Naive thymus-derived CD8-positive, alpha-beta T cell (primary cell): ENCODE measurements at regions of chr17 and their contacts with region 1.

Region 1: DNA sequence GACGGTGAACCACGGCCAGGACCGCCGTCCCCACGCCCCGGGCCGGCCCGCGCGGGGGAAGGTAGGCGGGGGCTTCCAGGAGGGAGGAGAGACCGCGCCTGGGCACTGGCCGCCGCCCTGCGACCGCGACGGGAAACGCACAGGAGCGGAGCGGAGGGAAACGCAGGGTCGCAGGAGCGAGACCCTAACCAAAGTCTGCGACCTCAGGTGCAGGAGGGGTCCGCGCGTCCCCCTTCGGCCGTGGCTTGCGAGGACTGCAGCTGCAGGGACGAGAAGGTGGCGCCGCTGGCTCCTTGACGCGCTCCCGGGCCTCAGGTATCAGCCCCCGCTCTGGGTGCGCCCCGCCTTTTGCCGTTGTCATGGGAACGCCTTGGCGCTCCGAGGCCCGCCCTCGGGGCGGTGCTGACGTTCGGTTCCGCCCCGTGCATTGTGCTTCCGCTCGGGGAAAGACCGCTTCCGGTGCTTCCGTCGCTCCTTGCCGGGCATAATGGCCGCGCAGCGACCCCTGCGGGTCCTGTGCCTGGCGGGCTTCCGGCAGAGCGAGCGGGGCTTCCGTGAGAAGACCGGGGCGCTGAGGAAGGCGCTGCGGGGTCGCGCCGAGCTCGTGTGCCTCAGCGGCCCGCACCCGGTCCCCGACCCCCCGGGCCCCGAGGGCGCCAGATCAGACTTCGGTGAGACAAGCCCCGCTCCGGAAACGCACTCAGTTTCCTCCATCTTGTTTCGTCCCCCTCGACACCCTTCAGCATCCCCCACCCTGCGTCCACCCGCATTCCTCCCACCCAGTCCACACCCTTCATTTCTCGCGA is at the start of gene OVCA2:
- DNase-seq: peak; percentile 95 to 98 (median 97)
- ATAC-seq: peak; percentile 87 to 92
- H3K4me3 Mint-ChIP-seq: peak within 1 kb of the TSS; percentile 85 to 97 (median 91)
- H3K27ac Mint-ChIP-seq: peak within 1 kb of the TSS; percentile 86 to 97 (median 94)
- H3K4me1 Mint-ChIP-seq: peaks cover 11 to 25% (median 23%) of the 10 kb centered on the region in 4 donors
- H3K27me3 Mint-ChIP-seq: no peaks in the 10 kb centered on the region
- polyA plus RNA-seq, gene OVCA2: 43.9 to 49.1 (median 45.8) TPM

Region 2: DNA sequence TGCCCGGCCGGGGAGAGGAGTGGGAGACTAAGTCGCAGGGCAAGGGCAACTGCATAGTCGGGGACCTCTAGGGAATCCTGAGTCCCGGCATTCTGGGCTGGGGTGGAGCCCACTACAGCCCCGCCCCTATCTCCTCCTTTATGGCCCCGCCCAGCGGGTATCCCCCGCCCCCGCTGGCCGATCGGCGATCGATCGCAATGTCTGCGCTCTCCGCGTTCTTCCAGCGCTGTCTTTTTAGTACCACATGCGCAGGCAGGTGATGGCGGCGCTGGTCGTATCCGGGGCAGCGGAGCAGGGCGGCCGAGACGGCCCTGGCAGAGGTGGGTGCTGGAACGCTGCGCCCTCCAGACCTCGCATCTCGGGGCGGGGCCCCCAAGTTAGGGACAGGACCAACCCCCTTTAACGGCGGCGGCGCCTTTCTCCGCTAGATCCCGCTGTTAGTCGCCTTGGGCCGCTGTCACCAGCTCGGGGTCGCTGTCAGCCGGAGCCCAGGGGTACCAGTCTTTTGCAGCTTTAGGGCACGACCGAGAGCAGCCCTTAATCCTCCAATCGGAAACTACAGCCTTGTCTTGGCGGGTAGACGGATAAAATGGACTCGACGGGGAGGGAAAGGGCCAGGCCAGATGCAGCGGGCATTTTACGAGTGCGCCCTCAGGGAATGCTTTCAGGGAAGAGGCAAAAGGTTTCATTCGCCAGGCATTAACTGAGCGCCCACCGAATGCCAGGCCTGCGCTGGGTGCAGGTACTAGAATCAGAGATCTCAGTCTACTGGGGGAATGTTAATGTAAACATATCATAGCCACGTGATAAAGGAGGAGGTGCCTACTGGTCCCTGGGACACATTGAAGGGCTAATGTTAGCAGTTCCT is 11.6 kb before region 1 on chr17 and contains the start of gene DPH1:
- POLR2A ChIA-PET with region 1: interaction called, 11 read pairs
- DNase-seq: peak; percentile 78 to 91 (median 81)
- ATAC-seq: peak; percentile 85
- H3K4me3 Mint-ChIP-seq: peak within 1 kb of the TSS; percentile 92 to 98 (median 95)
- H3K27ac Mint-ChIP-seq: peak within 1 kb of the TSS; percentile 77 to 98 (median 95)
- H3K4me1 Mint-ChIP-seq: peaks cover 17 to 43% (median 30%) of the 10 kb centered on the region in 4 donors
- H3K27me3 Mint-ChIP-seq: peaks cover 4 to 24% (median 14%) of the 10 kb centered on the region in 5 donors
- polyA plus RNA-seq, gene DPH1: 26.6 to 47.0 (median 35.5) TPM